HEK293 (cell line): ENCODE measurements at regions of chr14 and their contacts with region 1.

Region 1: GRCh38 chr14:75654127-75654732 is 6.4 kb downstream of the ERG28 start:
- H3K4me3 ChIP-seq: no peak overlapping the region
- H3K27ac ChIP-seq: no peak overlapping the region
- H3K4me1 ChIP-seq: no peaks in the 10 kb centered on the region
- CTCF ChIP-seq: peak; percentile 53; the same call in 1 of the 2 replicates

Region 2: GRCh38 chr14:75609606-75610471 is 44.4 kb before region 1 on chr14:
- CTCF ChIA-PET with region 1: interaction called, 12 read pairs
- POLR2A ChIA-PET with region 1: interaction called, 6 read pairs
- H3K4me3 ChIP-seq: no peak overlapping the region
- H3K27ac ChIP-seq: no peak overlapping the region
- H3K4me1 ChIP-seq: no peaks in the 10 kb centered on the region
- CTCF ChIP-seq: no peak

Region 3: GRCh38 chr14:75642056-75642455 is 12.2 kb before region 1 on chr14:
- CTCF ChIA-PET with region 1: interaction called, 17 read pairs
- POLR2A ChIA-PET with region 1: no interaction called
- H3K4me3 ChIP-seq: no peak overlapping the region
- H3K27ac ChIP-seq: no peak overlapping the region
- H3K4me1 ChIP-seq: peaks cover 7% of the 10 kb centered on the region
- CTCF ChIP-seq: no peak

Region 4: DNA sequence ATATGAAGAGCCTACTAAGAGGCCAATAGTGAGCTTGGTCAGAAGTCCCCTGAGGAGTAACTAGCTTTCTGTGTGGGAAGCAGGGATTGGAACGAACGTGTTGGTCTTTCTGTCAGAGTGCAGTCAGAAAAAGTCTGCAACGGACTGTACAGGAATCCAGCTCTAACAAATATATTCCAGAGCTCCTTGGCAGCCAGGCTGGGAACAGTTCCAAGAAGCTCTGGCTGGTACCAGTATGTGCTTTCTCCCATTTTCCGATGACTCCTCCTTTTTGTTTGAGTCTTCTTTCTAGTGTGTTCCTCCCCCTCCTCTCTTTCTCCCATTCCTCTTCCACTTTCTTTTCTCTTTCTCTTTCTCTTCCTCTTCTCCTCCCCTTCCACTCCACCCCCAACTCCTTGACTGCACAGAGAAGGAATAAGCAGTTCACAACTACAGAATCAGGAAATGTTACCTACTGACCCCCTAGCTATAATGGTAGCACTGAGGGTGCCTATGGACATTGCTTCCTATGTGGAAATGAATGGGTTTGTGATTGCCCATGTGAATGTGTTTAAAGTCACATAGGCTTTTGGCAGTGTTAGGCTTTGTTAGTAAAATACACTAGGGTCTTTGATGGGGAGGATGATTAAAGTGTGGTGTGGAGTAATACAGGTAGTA is 66.7 kb after region 1 on chr14:
- CTCF ChIA-PET with region 1: no interaction called
- POLR2A ChIA-PET with region 1: no interaction called
- H3K4me3 ChIP-seq: no peak overlapping the region
- H3K27ac ChIP-seq: no peak overlapping the region
- H3K4me1 ChIP-seq: peaks cover 7% of the 10 kb centered on the region
- CTCF ChIP-seq: no peak